Left cardiac atrium (tissue), 4 donors: ENCODE measurements at regions of chr4 and their contacts with region 1.

Region 1: DNA sequence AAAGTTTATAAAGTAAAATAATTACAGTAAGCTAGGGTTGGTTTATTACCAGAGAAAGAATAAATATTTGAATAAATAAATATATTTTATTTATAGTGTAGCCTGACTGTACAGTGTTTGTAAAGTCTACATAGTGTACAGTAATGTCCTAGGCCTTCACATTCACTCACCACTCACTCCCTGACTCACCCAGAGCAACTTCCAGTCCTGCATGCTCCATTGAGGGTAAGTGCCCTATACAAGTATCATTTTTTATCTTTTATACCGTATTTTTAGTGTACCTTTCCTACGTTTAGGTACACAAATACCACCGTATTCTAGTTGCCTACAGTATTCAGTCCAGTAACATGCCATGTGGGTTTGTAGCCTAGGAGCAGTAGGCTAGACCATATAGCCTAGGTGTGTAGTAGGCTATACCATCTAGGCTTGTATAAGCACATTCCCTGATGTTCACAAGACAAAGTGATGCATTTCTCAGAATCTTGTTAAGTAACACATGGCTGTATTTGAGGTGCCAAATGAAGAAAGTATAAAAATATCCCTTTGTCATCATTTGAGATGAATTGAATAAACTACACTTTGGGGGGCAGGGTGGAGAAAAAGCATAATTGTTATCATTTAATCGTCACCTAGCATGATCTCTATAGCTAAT is 14.7 kb upstream of the KLHL8 start:
- DNase-seq: no peak
- ATAC-seq: peak in 1 of 2 donors; percentile 35

Region 2: DNA sequence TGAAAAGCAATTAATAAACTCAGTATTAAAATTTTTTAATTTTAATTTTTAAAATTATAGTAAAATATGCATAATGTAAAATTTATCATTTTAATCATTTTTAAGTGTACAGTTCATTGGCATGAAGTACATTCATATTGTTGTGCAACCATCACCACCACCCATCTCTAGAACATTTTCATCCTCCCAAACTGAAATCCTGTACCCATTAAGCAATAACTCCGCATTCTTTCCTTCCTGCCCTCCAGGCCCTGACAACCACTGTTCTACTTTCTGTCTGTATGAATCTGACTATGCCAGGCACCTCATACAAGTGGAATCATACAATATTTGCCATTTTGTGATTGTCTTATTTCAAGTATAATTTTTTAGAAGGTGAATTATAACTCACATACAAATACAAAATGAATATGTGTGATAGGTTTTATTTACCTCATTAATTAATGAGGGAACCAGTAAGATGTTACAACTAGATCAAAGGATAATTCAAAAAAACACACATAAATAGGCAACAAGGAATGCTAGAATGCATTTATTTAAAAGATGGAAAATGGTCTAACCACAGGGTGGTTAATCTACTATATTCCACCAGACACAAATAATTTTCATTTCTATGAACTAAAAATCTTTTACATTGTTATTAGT is 313.4 kb before region 1 on chr4:
- intact Hi-C with region 1: loop called (anchors 2 to 5 kb)
- DNase-seq: no peak
- ATAC-seq: peak in 1 of 2 donors; percentile 83

Region 3: DNA sequence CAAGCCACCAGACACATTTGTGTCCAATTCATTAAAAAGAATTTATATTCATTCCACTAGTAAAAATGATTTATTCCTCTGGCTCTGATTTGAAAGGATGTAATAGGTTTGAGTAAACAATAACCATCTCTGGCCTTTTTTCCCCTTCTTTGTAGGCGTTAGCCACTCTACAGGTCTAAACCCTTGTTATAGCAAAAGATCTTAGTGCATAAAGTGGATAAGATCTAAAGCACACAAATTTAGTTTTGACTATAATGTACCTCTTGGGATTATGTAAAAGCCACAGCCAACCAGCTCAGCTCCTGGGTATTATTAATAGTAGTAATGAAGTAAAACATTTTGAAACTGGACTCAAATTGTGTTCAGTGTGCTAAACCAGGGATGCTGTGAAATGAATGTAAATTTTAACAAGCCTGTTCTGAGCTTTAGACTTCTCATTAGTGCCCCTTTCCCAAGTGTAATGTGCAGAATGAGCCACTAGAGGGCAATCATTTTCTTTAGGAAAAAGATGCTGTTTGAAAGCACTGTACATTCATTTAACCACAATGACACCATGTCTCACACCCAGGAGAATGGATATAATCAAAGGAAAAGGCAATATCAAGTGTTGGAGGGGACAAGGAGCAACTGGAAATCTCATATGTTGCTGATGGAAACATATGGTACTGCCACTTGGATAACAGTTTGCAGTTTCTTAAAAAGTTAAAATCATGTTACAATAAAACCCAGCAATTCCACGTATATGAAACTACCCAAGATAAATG is 84.5 kb before region 1 on chr4:
- intact Hi-C with region 1: loop called (anchors 1 to 5 kb)
- DNase-seq: no peak
- ATAC-seq: peak; percentile 44 to 75

Region 4: DNA sequence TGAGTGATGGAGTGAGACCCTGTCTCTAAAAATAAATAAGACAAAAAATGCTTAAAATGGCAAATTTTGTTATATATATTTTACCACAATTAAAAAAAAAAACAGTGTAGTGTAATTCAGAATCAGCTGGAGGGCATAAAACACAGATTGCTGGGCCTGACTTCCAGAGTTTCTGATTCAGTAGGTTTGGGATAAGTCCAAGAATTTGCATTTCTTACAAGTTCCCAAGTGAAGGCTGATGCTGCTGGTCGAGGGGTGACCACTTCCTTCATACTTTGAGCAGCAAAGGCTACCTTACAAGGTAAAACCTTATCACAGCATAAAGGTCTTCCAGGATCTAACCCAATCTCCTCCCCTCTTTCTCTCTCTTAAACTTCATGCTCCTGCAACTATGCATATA is 55.4 kb before region 1 on chr4:
- intact Hi-C with region 1: no loop called
- DNase-seq: no peak
- ATAC-seq: no peak